ENCODE measurements at regions of chr1 and their contacts with region 1.

Region 1: DNA sequence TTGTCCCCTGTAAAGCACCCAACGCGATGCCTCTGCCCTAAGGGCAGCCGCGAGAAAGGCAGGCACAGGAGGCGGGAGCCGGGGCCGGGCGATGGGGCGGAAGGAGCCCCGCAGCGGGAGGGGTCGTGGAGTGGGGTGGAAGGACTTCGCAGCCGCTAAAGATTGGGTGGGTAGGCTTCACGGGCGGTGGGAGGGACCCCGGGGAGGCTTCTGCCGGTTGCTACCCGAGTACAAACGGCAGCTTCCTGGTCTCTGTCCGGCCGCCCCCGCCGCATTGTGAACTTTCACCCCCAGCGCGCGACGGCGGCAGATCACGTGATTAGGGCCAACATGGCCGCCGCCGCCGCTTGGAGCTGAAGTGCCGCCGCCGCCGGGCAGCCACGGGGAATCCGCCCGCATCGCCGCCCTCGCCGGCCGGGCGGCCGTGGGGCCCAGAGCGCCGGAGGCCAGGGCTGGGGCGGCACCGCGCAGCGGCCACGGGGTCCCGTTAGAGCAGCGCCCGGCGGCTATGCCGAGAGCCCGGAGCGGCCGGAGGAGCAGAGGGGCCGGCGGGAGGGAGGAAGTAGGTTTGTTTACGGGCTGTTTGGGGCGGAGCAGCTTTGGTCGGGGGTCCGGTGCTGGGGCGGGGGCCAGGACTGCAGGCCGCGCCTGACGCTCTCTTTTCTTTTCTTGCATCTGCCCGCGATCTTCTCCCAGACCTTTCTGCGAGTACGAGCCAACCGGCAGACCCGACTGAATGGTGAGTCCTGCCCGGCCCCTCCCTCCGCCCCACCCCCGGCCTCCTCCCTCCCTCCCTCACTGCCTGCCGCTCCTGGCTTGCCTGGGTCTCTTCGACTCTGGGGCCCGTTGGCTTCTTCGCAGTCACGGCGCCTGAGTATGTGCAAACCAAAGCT is 42.4 kb downstream of the TMEM53 start:
- H3K4me3 ChIP-seq: peak overlapping the region; percentile 69
- H3K27ac ChIP-seq: peak overlapping the region; percentile 100
- H3K4me1 ChIP-seq: no peaks in the 10 kb centered on the region
- CTCF ChIP-seq: no peak

Region 2: DNA sequence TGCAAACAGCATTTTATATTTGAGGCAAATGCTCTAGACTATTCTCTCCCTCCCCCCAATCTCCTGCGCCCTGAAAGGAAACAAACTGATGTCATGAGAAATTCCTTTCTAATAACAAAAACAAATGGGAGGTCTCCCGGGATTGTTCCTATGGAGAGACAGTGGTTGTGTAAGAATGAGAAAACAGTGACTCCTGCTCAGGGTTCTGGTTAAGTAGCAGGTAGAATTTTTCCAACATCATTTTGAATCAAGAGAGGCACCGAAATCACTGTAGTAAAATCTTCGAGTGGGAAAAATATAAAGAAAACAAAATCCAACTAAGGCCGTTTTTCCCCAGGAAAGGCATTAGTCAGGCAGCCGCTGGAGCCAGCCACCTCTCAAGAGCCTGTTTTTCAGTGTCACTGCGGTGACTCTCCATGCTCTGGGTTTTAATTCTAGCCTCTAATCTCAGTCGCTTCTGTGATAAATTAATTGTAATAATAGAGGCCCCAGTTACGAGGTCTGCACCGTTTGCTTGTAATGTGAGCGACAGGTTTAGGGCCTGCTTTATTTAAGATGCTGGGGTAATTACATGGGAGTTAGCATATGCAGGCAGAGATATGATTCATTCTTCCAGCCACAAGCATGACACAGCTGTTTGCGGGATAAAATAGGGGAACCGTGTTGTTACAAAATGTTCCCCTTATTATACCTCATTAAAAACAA is 146.5 kb before region 1 on chr1:
- CTCF ChIA-PET with region 1: no interaction called
- POLR2A ChIA-PET with region 1: no interaction called
- H3K4me3 ChIP-seq: no peak overlapping the region
- H3K27ac ChIP-seq: no peak overlapping the region
- H3K4me1 ChIP-seq: peaks cover 5% of the 10 kb centered on the region; the same call in 1 of the 2 replicates
- CTCF ChIP-seq: no peak

Region 3: GRCh38 chr1:44609412-44609767 is 22.5 kb before region 1 on chr1:
- CTCF ChIA-PET with region 1: interaction called, 8 read pairs
- POLR2A ChIA-PET with region 1: interaction called, 18 read pairs
- H3K4me3 ChIP-seq: no peak overlapping the region
- H3K27ac ChIP-seq: no peak overlapping the region
- H3K4me1 ChIP-seq: 0 out of 2 replicates have a peak, but pooled peaks cover under 1% of the 10 kb centered on the region
- CTCF ChIP-seq: peak; percentile 37; the same call in 1 of the 2 replicates

Region 4: GRCh38 chr1:44616991-44617702 is 14.7 kb before region 1 on chr1:
- CTCF ChIA-PET with region 1: interaction called, 3 read pairs
- POLR2A ChIA-PET with region 1: interaction called, 27 read pairs
- H3K4me3 ChIP-seq: peak overlapping the region; percentile 34
- H3K27ac ChIP-seq: no peak overlapping the region
- H3K4me1 ChIP-seq: peaks cover 10% of the 10 kb centered on the region
- CTCF ChIP-seq: no peak

Region 5: DNA sequence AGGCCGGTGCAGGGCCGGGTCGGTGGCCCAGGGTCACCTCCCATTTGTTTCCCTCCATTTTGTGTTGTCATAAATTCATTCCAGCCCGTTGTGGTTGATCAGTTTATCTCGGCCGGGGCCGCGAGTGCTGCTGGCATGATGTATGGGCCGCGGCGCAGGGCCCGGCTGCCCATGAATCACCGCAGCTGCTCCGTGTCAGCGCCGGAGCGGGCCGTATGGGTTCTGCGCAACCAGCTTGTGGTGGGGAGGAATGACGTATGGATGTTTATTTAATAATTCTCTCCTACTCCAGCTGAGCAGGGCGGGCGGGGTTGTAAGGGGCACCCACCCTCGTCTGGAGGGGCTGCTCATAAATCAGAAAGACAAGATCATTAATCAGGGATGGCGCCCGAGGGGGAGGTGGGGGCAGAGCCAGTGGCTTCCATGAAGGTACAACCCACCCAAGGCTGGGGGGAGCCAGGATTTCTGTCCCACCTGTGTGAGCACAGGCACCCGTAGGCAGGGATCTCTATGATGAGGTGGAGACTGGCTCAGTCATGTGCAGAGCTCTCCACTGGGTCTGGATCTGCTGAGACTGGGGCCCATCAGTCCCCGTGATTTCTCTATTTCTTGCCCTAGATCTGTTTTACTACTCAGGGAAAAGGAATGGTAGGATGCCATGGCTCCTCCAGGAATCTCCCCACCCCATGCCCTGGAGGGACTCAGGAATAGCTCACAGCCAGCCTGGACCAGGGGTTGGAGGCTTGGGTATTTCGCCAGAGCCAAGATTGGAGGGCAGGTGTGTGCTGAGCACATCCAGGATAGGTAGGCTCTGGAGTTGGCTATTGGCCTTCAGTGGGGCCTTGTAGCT is 14.6 kb after region 1 on chr1:
- CTCF ChIA-PET with region 1: interaction called, 47 read pairs
- POLR2A ChIA-PET with region 1: interaction called, 22 read pairs
- H3K4me3 ChIP-seq: no peak overlapping the region
- H3K27ac ChIP-seq: no peak overlapping the region
- H3K4me1 ChIP-seq: no peaks in the 10 kb centered on the region
- CTCF ChIP-seq: no peak

Region 6: DNA sequence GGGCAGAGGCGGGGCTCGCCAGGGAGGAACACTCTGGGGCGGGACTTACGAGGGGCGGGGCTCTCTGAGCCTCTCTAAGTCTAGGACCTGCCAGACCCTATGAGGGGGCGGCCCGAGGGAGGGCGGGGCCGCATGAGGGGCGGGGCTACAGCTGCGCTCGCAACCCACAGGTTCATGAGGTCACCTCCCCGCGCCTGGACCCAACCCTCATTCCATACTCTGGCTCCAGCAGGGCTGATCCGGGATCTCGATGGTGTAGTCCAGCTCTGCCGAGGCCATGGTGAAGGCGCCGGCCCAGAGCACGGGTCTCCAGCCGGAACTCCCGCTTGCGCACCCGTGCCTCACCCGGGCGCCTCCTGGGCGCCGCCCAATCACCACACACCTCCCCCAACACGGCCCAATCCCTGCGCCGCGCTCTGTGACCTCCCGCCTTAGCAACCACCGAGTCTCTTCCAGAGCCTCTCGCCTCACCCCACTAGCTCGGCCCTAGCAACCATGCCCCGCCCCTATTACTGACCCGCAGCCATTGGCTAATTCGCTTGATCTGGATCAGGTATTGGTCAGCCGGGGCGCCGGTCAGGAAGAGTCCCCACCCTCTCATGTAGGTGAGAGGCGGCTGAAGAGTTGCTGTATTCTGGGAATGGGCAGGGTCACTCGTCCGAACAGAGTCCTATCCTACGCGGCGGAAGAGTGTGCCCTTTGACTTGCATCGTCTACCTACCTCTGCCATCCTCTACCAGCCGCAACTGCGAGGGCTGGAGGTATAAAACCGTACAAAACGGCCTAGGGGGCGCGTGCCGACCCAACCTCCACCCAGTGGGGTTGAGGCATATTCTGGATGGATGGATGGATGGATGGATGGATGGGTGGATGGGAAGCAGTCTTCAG is 42.5 kb after region 1 on chr1 and contains the starts of genes ARMH1 and TMEM53:
- CTCF ChIA-PET with region 1: no interaction called
- POLR2A ChIA-PET with region 1: interaction called, 16 read pairs
- H3K4me3 ChIP-seq: peak within 1 kb of the TSS; percentile 86
- H3K27ac ChIP-seq: no peak within 1 kb of the TSS
- H3K4me1 ChIP-seq: peaks cover 3% of the 10 kb centered on the region; the same call in 1 of the 2 replicates
- CTCF ChIP-seq: no peak; the same call in 1 of the 2 replicates

Measured in HEK293 (cell line).